Gastrocnemius medialis (tissue), 4 donors: ENCODE measurements at regions of chr11 and their contacts with region 1.

Region 1: GRCh38 chr11:94519478-94520084 is 7.3 kb downstream of the C11orf97 start:
- DNase-seq: no peak
- ATAC-seq: no peak
- H3K4me3 ChIP-seq: no peak overlapping the region
- H3K27ac ChIP-seq: no peak overlapping the region
- H3K4me1 ChIP-seq: no peaks in the 10 kb centered on the region
- H3K27me3 ChIP-seq: no peaks in the 10 kb centered on the region
- CTCF ChIP-seq: peak; percentile 31 to 75 (median 41)
- POLR2A ChIP-seq: no peak

Region 2: GRCh38 chr11:94504689-94505293 is 14.8 kb before region 1 on chr11:
- in situ Hi-C with region 1: no loop called
- intact Hi-C with region 1: no loop called
- DNase-seq: no peak
- ATAC-seq: no peak
- H3K4me3 ChIP-seq: no peak overlapping the region
- H3K27ac ChIP-seq: no peak overlapping the region
- H3K4me1 ChIP-seq: no peaks in the 10 kb centered on the region
- H3K27me3 ChIP-seq: no peaks in the 10 kb centered on the region
- CTCF ChIP-seq: peak; percentile 24 to 59 (median 41)
- POLR2A ChIP-seq: no peak

Region 3: GRCh38 chr11:94563176-94563847 is 43.7 kb after region 1 on chr11:
- in situ Hi-C with region 1: no loop called
- intact Hi-C with region 1: loop called (anchors 2 kb)
- DNase-seq: no peak
- ATAC-seq: peak; percentile 88
- H3K4me3 ChIP-seq: no peak overlapping the region
- H3K27ac ChIP-seq: no peak overlapping the region
- H3K4me1 ChIP-seq: no peaks in the 10 kb centered on the region
- H3K27me3 ChIP-seq: no peaks in the 10 kb centered on the region
- CTCF ChIP-seq: no peak
- POLR2A ChIP-seq: no peak

Region 4: DNA sequence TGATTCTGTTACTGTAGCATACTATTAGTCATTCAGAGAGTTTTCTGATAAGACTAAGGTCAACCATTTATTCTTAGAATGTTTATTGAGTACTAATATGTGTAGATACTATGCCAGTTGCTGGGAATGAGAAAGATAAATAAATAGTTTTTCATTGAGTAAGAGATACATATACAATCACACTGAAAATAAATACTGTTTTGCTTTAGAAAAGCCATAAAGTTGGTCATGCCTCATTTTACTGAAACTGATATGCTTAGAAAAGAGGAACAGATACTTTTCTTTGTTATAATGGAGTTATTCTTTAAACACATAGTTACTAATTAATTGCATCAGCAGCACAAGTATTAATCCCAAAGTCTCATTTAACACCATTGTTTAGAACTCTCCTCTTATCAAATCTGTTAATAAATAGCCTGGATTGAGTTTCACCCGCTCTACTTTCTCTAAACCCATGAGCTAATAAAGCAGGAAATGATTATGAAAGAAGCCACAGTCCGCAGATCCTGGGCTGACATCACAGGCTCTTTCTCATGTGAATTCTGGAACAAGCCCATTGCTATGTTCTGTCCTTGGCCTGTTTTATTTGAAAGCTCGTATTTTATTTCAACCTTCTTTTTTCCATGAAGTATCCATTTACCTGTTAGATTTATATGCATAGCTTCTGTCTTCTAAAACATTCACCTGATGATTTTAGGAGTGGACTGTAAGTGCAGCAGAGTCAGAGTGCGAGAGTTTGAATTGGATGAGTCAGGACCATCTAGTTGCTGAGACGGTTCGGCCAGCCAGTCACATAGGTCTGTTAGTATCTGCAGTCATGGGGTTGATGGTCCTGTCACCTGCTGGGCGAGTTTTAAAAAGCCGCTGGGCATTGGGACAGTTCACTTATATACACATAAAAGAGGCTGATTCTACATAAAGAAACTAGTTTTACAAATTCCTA is 83.1 kb after region 1 on chr11:
- in situ Hi-C with region 1: loop called in 1 of 4 experiments (anchors 5 kb)
- intact Hi-C with region 1: loop called (anchors 1 kb)
- DNase-seq: peak in 1 of 2 donors; percentile 11
- ATAC-seq: peak in 1 of 2 donors; percentile 70
- H3K4me3 ChIP-seq: no peak overlapping the region
- H3K27ac ChIP-seq: no peak overlapping the region
- H3K4me1 ChIP-seq: no peaks in the 10 kb centered on the region
- H3K27me3 ChIP-seq: no peaks in the 10 kb centered on the region
- CTCF ChIP-seq: peak in 2 of 5 experiments; percentile 28 to 38
- POLR2A ChIP-seq: no peak